ENCODE measurements at regions of chr12 and their contacts with region 1.

Region 1: DNA sequence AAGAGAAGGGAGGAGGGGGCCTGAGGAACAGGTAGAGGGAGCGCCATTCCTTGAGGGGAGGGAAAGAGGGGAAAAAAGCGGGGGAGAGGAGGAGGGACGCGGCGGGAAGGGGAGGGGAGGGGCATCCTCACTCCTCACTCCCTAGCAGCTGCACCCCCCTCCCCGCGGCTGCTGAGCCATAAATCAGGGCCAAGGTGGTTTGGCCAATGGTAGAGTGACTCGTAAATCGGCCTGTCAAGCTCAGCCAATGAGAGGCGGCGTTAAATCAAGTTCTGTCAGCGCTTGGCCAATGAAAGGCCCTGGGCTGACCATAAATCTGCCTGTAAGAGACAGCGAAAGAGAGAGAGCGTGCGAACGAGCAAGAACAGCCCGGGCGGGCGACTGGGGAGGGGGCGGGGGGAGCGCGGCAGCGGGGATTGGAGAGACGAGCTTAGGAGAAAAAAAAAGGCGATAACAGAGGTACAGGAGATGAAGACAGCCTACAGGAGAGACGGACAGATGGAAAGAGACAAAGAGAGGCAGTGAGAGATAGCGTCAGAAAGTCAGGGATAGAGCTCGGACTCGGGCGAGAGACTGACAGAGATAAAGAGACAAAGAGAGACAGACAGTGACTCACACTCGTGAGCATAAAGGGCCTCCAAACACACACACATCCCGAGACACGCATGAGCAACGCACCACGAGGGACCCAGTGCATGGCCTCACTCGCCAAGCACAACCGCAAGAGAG is 5.1 kb downstream of the GPR84 start:
- DNase-seq: peak; percentile 100
- H3K4me3 ChIP-seq: peak overlapping the region; percentile 49
- CTCF ChIP-seq: no peak

Region 2: DNA sequence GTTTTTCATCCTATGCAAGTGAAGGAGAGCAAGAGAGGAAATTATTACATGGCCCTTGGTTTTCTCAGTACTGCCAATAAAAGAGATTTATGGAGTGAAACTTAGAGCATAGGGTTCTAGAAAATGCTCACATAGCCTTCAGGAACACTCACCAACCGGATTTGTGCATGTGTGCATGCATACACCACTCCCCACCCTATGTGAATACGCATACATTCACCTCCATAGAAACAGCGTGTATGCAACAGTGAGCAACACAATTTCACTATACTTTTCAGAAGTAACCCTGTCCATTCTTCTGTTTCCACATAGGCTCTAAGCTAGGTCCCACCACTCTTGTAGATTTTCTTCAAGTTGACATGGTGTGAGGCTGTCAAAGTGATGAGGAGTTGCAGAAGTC is 452.1 kb before region 1 on chr12:
- in situ Hi-C with region 1: no loop called
- DNase-seq: no peak
- H3K4me3 ChIP-seq: no peak overlapping the region
- CTCF ChIP-seq: no peak

Region 3: GRCh38 chr12:54214553-54215406 is 144.4 kb before region 1 on chr12:
- in situ Hi-C with region 1: loop called (anchors 25 kb)
- DNase-seq: peak; percentile 88
- H3K4me3 ChIP-seq: no peak overlapping the region
- CTCF ChIP-seq: peak; percentile 99

Region 4: GRCh38 chr12:54535474-54535873 is 176.3 kb after region 1 on chr12:
- in situ Hi-C with region 1: no loop called
- DNase-seq: no peak
- H3K4me3 ChIP-seq: no peak overlapping the region
- CTCF ChIP-seq: no peak